ENCODE measurements at regions of chr18 and their contacts with region 1.

Region 1: GRCh38 chr18:50878345-50879301 is at the start of gene ME2:
- DNase-seq: peak; percentile 91 to 92 (median 92)
- H3K4me3 ChIP-seq: peak within 1 kb of the TSS; percentile 80 to 94 (median 84)
- H3K4me3 Mint-ChIP-seq: peak within 1 kb of the TSS; percentile 99
- H3K27ac ChIP-seq: peak within 1 kb of the TSS; percentile 95 to 97
- H3K27ac Mint-ChIP-seq: peak within 1 kb of the TSS; percentile 97 to 99 (median 98)
- H3K4me1 ChIP-seq: peaks cover 51 to 56% of the 10 kb centered on the region in 2 donors
- H3K4me1 Mint-ChIP-seq: peaks cover 41% of the 10 kb centered on the region
- H3K27me3 ChIP-seq: no peaks in the 10 kb centered on the region
- H3K27me3 Mint-ChIP-seq: peaks cover 0 to 2% (median 0%) of the 10 kb centered on the region in 3 donors
- CTCF ChIP-seq: no peak
- polyA plus RNA-seq, gene ME2: 48.7 to 93.8 (median 71.7) TPM

Region 2: DNA sequence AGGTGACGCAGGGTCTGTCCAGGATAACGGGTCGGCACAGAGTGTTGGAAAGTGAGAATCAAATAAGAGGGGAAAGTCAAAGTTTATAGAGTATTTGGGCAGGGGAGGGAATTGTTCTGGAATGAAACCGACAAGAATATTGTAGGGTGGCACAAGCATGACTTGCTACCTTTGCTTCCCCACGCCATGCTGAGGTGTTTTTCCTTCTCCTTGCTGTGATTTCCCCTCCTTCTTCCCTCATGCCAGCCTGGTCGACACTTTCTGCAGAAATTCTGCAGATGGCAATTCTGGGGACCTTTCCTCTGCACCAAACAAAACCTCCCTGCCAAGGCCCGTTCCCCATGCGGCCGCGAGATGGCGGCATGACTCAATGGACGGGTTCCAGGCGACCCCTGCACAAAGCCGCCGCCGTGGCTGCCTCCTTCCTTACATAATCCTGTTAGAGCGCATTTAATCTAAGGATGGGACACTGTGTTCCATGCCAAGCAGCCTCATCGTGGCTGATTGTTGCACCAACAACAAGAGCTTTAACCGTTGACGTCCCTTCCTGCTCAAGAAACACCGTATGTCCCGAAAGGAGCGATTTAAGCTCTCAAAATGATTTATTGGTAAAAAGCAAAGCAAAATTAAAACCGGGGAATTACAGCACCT is 58.8 kb before region 1 on chr18 and contains the start of gene MRO:
- intact Hi-C with region 1: loop called (anchors 5 kb)
- DNase-seq: peak; percentile 69 to 74 (median 70)
- H3K4me3 ChIP-seq: peak within 1 kb of the TSS; percentile 42 to 79 (median 71)
- H3K4me3 Mint-ChIP-seq: no peak within 1 kb of the TSS
- H3K27ac ChIP-seq: peak within 1 kb of the TSS in 1 of 2 donors; percentile 76
- H3K27ac Mint-ChIP-seq: no peak within 1 kb of the TSS
- H3K4me1 ChIP-seq: peaks cover 23 to 28% of the 10 kb centered on the region in 2 donors
- H3K4me1 Mint-ChIP-seq: no peaks in the 10 kb centered on the region
- H3K27me3 ChIP-seq: no peaks in the 10 kb centered on the region
- H3K27me3 Mint-ChIP-seq: peaks cover 0 to 5% (median 0%) of the 10 kb centered on the region in 3 donors
- CTCF ChIP-seq: peak; percentile 91
- polyA plus RNA-seq, gene MRO: 0.01 TPM in 1 of 3 donors, not detected in the others

Region 3: DNA sequence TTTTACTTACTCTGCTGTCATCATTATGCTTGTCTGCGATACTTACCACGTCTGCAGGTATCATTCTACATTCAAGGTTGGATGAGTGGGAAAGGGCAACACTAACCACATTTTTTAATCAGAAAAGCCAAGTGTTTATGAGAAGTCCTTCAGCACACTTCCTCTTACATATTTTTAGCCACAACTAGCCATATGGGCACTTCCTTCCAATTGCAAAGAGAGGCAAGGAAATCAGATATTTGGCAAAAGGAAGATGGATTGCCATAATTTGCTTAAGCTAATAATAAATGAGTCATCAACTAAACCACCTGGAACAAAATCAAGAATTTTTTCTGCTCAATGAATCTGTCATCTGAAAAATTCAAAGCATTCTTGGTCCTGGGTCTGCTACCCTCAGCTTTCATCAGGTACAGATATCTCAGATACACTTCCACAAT is 42.1 kb before region 1 on chr18:
- intact Hi-C with region 1: loop called in 1 of 2 experiments (anchors 5 kb)
- DNase-seq: peak; percentile 37 to 63 (median 52)
- H3K4me3 ChIP-seq: peak overlapping the region in 1 of 3 experiments; percentile 49
- H3K4me3 Mint-ChIP-seq: peak overlapping the region in 1 of 2 donors; percentile 89
- H3K27ac ChIP-seq: peak overlapping the region in 1 of 2 donors; percentile 63
- H3K27ac Mint-ChIP-seq: peak overlapping the region; percentile 73 to 92 (median 85)
- H3K4me1 ChIP-seq: peaks cover 17 to 21% of the 10 kb centered on the region in 2 donors
- H3K4me1 Mint-ChIP-seq: peaks cover 21% of the 10 kb centered on the region
- H3K27me3 ChIP-seq: no peaks in the 10 kb centered on the region
- H3K27me3 Mint-ChIP-seq: peaks cover 0 to 6% (median 1%) of the 10 kb centered on the region in 3 donors
- CTCF ChIP-seq: no peak

Region 4: GRCh38 chr18:50961974-50962373 is 83.4 kb after region 1 on chr18:
- intact Hi-C with region 1: no loop called
- DNase-seq: no peak
- H3K4me3 ChIP-seq: no peak overlapping the region
- H3K4me3 Mint-ChIP-seq: no peak overlapping the region
- H3K27ac ChIP-seq: no peak overlapping the region
- H3K27ac Mint-ChIP-seq: no peak overlapping the region
- H3K4me1 ChIP-seq: no peaks in the 10 kb centered on the region
- H3K4me1 Mint-ChIP-seq: no peaks in the 10 kb centered on the region
- H3K27me3 ChIP-seq: no peaks in the 10 kb centered on the region
- H3K27me3 Mint-ChIP-seq: peaks cover 0 to 6% (median 2%) of the 10 kb centered on the region in 3 donors
- CTCF ChIP-seq: no peak

Region 5: DNA sequence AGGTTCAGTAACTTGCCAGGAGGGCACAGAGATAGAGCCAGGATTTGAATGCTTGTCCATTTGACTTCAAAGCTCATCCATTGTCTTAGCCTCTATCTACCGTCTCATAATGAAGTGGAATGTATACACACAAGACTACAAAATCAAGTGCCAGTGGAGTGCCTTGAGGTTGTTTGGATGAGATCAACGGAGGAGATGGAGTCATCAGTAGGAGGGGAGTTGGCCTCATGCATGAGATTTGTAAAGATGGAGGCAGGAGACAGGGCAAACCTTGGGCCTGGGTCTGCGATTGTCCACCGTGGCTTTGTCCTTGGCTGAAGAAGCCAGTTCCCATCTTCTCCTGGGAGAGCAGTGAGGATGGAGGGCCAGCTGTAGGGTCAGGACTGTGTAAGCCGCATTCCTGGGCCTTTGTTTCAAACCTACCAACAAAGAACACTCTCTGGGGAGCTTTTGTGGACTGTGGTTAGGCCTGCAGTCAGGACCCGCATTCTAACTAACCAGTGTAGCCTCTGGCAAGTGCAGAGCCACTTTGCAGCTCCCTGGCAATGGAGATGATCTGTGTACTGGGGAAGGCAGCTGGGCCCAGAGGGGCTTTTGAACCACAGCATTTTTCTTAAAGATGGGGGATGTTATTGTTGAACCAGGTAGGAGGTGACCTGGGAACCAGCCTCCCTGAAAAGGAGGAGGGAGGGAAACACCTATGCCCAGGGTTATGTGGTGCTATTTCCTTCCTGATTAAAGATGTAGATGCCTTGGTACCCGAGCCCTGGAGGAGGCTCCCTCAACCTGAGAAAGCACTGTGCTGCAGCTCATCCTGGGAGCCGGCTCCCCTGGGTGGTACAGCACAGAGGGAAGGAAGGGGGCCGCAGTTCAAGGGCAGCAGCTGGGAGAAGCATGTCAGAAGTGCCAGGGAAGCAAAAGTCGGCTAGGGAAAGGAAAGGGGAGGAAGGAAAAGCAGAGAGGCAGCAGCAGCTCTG is 138.6 kb after region 1 on chr18:
- intact Hi-C with region 1: no loop called
- DNase-seq: no peak
- H3K4me3 ChIP-seq: no peak overlapping the region
- H3K4me3 Mint-ChIP-seq: peak overlapping the region in 1 of 2 donors; percentile 4
- H3K27ac ChIP-seq: no peak overlapping the region
- H3K27ac Mint-ChIP-seq: peak overlapping the region in 2 of 7 donors; percentile 14 to 40
- H3K4me1 ChIP-seq: no peaks in the 10 kb centered on the region
- H3K4me1 Mint-ChIP-seq: no peaks in the 10 kb centered on the region
- H3K27me3 ChIP-seq: no peaks in the 10 kb centered on the region
- H3K27me3 Mint-ChIP-seq: no peaks in the 10 kb centered on the region
- CTCF ChIP-seq: no peak

Region 6: GRCh38 chr18:51029694-51030536 is 151.3 kb after region 1 on chr18 and contains the start of gene SMAD4:
- intact Hi-C with region 1: loop called in 1 of 2 experiments (anchors 10 kb)
- DNase-seq: peak; percentile 91 to 95 (median 95)
- H3K4me3 ChIP-seq: peak within 1 kb of the TSS; percentile 75 to 89 (median 78)
- H3K4me3 Mint-ChIP-seq: peak within 1 kb of the TSS; percentile 89 to 99
- H3K27ac ChIP-seq: peak within 1 kb of the TSS; percentile 82 to 89
- H3K27ac Mint-ChIP-seq: peak within 1 kb of the TSS; percentile 96 to 99 (median 98)
- H3K4me1 ChIP-seq: peaks cover 41 to 54% of the 10 kb centered on the region in 2 donors
- H3K4me1 Mint-ChIP-seq: peaks cover 48% of the 10 kb centered on the region
- H3K27me3 ChIP-seq: no peaks in the 10 kb centered on the region
- H3K27me3 Mint-ChIP-seq: no peaks in the 10 kb centered on the region
- CTCF ChIP-seq: no peak
- polyA plus RNA-seq, gene SMAD4: 21.0 to 34.0 (median 29.1) TPM

Measured in CD14-positive monocyte (primary cell).